ENCODE measurements at regions of chr11 and their contacts with region 1.

Region 1: GRCh38 chr11:123580557-123581275 is 73.7 kb downstream of the SCN3B start:
- DNase-seq: peak; percentile 59 to 74
- ATAC-seq: peak; percentile 94

Region 2: DNA sequence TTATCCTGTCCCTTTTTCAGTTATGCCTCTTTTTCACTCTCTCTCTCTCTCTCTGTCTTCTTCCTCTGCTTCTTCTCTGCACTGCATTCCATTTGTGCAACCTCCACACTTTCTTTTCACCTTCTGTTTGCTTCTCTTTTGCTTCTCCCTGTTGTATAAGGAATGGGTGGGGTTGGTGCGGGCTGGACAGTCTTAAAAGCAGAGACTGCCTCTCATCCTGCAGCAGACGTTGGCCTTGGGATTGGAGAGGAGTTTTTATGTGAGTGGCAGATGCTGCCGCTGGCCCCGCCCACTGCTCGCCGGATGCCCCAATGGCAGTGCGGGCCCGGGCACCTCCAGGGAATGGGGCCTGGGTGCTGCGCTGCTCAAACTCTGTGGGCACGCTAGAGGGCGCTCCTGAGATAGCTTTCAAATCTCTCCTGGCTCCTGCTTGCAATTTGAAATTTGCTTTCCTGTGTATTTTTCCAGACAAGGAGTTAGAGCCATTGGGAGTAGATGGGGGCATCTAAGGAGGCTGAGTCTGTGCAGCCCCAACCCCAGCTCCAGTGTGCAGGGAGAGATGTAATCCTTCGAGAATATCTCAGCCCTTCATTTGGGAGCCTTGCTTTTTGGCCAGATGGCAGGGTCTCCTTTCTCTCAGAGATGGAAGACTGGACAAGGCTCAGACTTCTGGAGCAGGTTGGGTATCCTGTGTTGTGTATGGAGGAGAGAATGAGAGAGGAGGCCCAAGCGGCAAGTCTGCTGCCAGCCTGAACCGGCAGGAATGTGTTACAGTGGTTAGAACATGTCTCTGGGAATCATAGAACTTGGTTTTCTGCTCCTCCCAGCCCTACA is 69.5 kb before region 1 on chr11:
- intact Hi-C with region 1: loop called in 1 of 2 experiments (anchors 5 kb)
- DNase-seq: peak; percentile 75 to 84
- ATAC-seq: peak; percentile 100

Region 3: DNA sequence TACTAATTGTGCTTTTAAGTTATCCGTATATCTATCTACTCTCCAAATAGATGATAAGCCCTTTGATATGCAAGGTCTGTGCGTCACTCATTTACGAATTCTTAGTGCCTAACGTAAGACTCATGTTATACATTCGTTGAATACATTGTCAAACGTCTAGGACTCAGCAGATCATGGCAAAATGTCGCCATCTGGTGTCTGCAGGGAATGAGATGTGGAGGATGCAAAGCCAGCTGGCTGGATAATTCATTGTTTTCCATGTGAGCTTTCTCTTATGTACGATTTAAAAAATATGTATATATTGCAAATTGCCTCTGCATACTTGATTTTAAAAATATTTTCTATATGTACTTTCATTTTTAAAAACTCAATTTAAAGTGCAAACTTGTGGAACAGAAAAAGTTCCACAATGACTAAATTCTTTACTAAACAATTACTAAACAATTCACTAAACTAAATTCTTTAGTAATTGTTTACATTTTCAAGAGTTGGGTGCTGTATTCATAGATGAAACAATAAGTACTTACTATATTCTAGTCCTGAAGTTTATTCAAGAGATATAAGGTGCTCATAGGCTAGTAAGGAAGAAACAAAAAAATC is 127.0 kb after region 1 on chr11:
- intact Hi-C with region 1: loop called in 1 of 2 experiments (anchors 2 kb)
- DNase-seq: peak in 1 of 2 donors; percentile 69
- ATAC-seq: peak; percentile 75

Measured in left colon (tissue), 2 donors.